Activated B cell treated with CpG ODN at 0.5 μM for 24 hours (primary cell): ENCODE measurements at regions of chr1 and their contacts with region 1.

Region 1: DNA sequence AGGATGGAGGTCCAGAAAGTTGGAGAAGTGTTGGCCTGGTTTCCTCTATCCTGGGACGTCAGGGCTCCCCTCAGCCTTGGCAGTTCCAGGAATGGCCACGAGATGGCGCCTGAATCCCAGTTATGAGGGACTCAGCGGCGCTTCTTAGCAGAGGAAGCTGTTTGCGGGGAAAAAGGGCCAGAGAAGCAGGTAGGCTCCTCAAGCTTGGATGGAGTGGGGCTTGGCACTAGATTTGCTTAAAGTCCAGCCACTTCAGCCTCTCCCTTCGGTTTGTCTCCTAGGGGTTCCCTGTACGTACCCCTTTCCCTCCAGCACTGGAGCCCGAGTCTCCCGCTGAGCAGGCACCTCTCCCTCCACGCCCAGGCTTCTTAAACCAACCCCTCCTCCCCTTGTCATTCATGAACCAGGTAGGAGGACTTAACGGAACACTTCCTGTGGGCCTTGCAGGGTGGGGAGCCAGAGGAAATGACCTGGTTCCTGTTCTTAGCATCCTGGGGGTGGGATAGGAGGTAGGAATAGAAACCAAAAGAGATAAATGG is 32.0 kb upstream of the TENT5B start:
- DNase-seq: peak; percentile 85
- ATAC-seq: peak; percentile 96
- H3K4me3 Mint-ChIP-seq: peak overlapping the region; percentile 28
- H3K27ac Mint-ChIP-seq: no peak overlapping the region
- H3K4me1 Mint-ChIP-seq: peaks cover 16% of the 10 kb centered on the region
- H3K27me3 Mint-ChIP-seq: no peaks in the 10 kb centered on the region
- CTCF ChIP-seq: peak; percentile 68

Region 2: DNA sequence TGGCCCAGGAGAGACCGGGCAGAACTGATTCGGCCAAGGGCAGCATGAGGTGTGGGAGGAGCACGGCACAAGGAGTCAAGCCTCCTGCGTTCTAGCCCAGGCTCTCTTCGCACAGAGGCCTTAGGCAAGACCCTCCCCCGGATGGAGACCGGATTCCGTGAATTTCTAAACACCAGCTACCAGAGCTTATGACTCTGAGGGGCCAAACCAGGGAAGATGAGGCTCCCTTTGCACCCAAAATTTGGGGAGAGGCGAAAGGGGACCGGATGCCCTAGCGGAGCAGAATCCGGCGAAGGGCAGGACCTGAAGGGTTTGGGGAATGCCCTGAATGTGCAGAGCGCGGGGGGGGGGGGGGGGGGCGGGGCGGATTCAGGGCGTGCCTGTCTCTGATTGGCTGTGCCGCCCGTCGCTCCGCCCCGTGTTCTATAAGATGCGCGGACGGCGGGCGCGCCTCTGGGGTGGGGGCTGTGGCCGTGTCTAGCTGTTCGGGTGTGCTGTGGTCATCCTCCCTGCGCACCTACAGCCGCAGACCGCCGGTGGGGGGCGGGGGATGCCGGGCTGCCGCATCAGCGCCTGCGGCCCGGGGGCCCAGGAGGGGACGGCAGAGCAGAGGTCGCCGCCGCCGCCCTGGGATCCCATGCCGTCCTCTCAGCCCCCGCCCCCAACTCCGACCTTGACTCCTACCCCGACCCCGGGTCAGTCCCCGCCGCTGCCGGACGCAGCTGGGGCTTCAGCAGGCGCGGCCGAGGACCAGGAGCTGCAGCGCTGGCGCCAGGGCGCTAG is 51.3 kb before region 1 on chr1 and contains the start of gene TRNP1:
- CTCF ChIA-PET with region 1: interaction called, 41 read pairs
- POLR2A ChIA-PET with region 1: no interaction called
- intact Hi-C with region 1: loop called (anchors 1 kb)
- DNase-seq: peak; percentile 68
- ATAC-seq: peak; percentile 71
- H3K4me3 Mint-ChIP-seq: peak within 1 kb of the TSS; percentile 81
- H3K27ac Mint-ChIP-seq: no peak within 1 kb of the TSS
- H3K4me1 Mint-ChIP-seq: peaks cover 20% of the 10 kb centered on the region
- H3K27me3 Mint-ChIP-seq: peaks cover 33% of the 10 kb centered on the region
- CTCF ChIP-seq: no peak
- total RNA-seq, gene TRNP1: 0.24 and 0.44 TPM in 2 replicates

Region 3: GRCh38 chr1:27097484-27097917 is 52.8 kb after region 1 on chr1:
- CTCF ChIA-PET with region 1: interaction called, 290 read pairs
- POLR2A ChIA-PET with region 1: interaction called, 7 read pairs
- intact Hi-C with region 1: loop called (anchors 1 kb)
- DNase-seq: peak; percentile 61
- ATAC-seq: peak; percentile 40
- H3K4me3 Mint-ChIP-seq: no peak overlapping the region
- H3K27ac Mint-ChIP-seq: no peak overlapping the region
- H3K4me1 Mint-ChIP-seq: peaks cover 22% of the 10 kb centered on the region
- H3K27me3 Mint-ChIP-seq: no peaks in the 10 kb centered on the region
- CTCF ChIP-seq: peak; percentile 72

Region 4: DNA sequence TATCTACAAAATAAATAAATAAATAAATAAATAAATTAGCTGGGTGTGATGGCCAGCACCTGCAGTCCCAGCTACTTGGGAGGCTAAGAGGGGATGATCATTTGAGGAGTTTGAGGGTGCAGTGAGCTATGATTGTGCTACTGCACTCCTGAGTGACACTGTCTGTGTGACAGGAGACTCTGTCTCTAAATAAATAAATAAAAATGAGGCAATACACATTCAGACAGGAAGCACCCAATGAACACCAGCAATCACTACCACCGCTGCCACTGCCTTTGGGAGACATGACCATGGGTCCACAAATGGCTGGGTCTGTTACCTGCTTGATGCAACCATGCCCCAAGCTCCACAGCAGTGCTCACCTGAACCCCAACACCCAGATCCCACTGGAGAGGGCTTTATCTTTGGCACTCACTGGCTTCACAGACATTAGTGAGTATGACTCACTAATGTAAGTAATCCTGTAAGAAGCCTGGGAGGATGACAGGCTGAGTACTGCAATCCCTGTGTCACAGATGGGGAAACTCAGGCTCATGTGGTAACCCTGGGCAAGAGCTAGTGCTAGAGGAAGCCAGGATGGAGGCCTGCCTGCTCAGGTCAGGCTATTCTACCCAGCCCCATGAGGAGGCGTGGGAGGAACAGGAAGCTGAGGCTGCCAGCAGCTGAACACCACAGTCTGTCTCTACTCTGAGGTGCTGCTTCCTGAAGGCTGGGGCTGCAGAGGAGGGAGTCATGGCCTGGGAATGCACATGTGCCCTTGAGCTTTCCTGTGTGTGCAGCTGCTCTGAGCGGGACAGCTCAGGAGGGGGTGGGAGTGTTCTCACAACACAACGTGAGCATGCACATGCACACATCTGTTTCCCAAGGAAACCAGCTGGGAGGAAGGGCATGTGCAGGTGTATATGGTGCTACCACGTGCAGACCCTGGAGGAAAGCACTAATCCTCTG is 67.2 kb after region 1 on chr1:
- CTCF ChIA-PET with region 1: interaction called, 10 read pairs
- POLR2A ChIA-PET with region 1: no interaction called
- intact Hi-C with region 1: no loop called
- DNase-seq: no peak
- ATAC-seq: peak; percentile 97
- H3K4me3 Mint-ChIP-seq: peak overlapping the region; percentile 48
- H3K27ac Mint-ChIP-seq: peak overlapping the region; percentile 80
- H3K4me1 Mint-ChIP-seq: peaks cover 24% of the 10 kb centered on the region
- H3K27me3 Mint-ChIP-seq: no peaks in the 10 kb centered on the region
- CTCF ChIP-seq: no peak

Region 5: DNA sequence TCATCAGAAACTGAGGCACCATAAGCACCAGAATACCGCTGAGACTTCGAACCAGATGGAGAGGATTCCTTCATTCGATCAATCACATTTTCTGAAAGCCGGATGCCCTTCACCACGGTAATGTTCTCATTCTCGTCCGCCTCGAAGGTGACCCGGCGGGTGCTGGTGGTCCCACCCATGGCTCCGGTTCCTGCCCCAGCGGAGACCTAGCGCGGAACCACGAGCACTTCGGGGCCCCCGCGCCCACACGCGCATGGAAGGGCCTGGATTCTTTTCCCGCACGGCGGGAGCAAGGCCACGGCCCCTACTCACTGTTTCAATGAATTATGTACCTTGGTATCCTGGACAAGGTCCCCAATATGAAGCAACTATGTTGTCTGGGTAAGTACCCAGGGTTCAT is 156.6 kb after region 1 on chr1:
- CTCF ChIA-PET with region 1: interaction called, 11 read pairs
- POLR2A ChIA-PET with region 1: no interaction called
- intact Hi-C with region 1: loop called (anchors 1 kb)
- DNase-seq: no peak
- ATAC-seq: no peak
- H3K4me3 Mint-ChIP-seq: no peak overlapping the region
- H3K27ac Mint-ChIP-seq: no peak overlapping the region
- H3K4me1 Mint-ChIP-seq: peaks cover 6% of the 10 kb centered on the region
- H3K27me3 Mint-ChIP-seq: no peaks in the 10 kb centered on the region
- CTCF ChIP-seq: no peak

Region 6: GRCh38 chr1:27300341-27301051 is 255.8 kb after region 1 on chr1:
- CTCF ChIA-PET with region 1: interaction called, 19 read pairs
- POLR2A ChIA-PET with region 1: no interaction called
- intact Hi-C with region 1: no loop called
- DNase-seq: peak; percentile 72
- ATAC-seq: peak; percentile 90
- H3K4me3 Mint-ChIP-seq: no peak overlapping the region
- H3K27ac Mint-ChIP-seq: no peak overlapping the region
- H3K4me1 Mint-ChIP-seq: peaks cover 3% of the 10 kb centered on the region
- H3K27me3 Mint-ChIP-seq: no peaks in the 10 kb centered on the region
- CTCF ChIP-seq: peak; percentile 99